ENCODE measurements at regions of chr4 and their contacts with region 1.

Region 1: GRCh38 chr4:119050527-119051090 is 85.0 kb upstream of the MYOZ2 start:
- DNase-seq: no peak

Region 2: DNA sequence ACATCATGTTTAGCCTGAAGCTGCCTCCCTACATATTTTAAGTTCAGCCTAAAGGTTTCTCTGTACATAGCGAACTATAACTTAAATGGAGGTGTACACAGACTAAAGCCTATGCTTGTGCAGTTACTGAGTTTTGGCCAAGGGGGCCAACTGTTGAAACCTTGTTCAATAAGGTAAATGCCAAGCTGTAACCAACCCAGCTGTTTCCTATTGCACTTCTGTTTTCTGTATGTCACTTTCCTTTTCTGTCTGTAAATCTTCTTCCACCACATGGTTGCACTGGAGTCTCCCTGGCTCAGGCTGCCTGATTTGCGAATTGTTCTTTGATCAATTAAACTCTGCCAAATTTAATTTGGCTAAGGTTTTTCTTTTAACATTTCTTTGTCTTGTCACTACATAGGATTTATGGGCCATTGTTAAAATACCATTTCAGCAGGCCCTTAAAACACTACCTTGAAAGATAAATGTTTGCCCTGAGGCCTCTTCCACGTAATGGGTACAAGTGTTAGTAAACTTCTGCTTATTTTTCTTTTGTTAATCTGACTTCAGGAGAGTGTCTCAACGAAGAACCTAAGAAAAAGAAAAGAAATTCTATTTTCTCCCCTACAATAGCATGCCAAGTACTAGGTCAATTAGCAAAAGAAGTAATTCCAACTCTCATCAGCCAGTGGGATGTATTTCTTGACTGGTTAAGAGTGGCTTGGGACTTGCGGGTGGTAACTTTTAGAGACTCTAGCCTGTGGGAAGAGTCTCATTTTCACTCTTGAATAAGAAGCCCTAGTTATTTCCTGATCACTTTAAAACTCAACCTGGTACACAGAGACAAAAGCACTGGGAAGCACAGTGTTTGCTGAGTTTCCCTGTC is 652.2 kb before region 1 on chr4:
- intact Hi-C with region 1: loop called in 1 of 2 experiments (anchors 10 kb)
- DNase-seq: no peak

Region 3: GRCh38 chr4:119038116-119038841 is 12.3 kb before region 1 on chr4:
- intact Hi-C with region 1: no loop called
- DNase-seq: no peak

Region 4: DNA sequence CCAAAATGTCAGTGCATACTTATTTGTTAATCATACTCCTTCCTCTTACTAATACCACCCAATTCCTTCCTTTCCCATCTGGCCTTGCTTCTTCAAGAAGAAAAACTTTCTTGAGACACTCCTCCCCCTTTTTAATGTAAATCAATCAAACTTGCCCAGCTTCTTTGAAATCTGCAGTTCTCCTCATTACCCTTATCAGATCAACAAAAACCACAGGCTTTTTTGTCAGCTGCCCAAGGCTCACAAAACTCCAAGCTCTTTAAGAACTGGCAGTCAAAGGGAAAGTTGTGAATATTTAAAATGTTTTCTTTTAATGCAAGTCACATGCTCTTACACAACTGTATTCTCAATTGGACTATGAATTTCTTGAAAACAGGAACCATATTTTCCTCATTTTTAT is 73.7 kb after region 1 on chr4:
- intact Hi-C with region 1: no loop called
- DNase-seq: no peak